ENCODE measurements at regions of chr6 and their contacts with region 1.

Region 1: GRCh38 chr6:170516783-170517616 is 36.1 kb downstream of the PSMB1 start:
- DNase-seq: no peak
- ATAC-seq: peak; percentile 84
- H3K4me3 Mint-ChIP-seq: no peak overlapping the region
- H3K27ac Mint-ChIP-seq: no peak overlapping the region
- H3K4me1 Mint-ChIP-seq: peaks cover 2% of the 10 kb centered on the region
- H3K27me3 Mint-ChIP-seq: peaks cover 24% of the 10 kb centered on the region
- CTCF ChIP-seq: no peak

Region 2: GRCh38 chr6:168895102-168895812 is 1621.7 kb before region 1 on chr6:
- CTCF ChIA-PET with region 1: interaction called, 4 read pairs
- POLR2A ChIA-PET with region 1: no interaction called
- intact Hi-C with region 1: loop called (anchors 1 kb)
- DNase-seq: peak; percentile 48
- ATAC-seq: peak; percentile 88
- H3K4me3 Mint-ChIP-seq: peak overlapping the region; percentile 51
- H3K27ac Mint-ChIP-seq: no peak overlapping the region
- H3K4me1 Mint-ChIP-seq: peaks cover 6% of the 10 kb centered on the region
- H3K27me3 Mint-ChIP-seq: peaks cover 6% of the 10 kb centered on the region
- CTCF ChIP-seq: peak; percentile 98

Region 3: GRCh38 chr6:168956884-168957730 is 1559.9 kb before region 1 on chr6:
- CTCF ChIA-PET with region 1: interaction called, 7 read pairs
- POLR2A ChIA-PET with region 1: no interaction called
- intact Hi-C with region 1: loop called (anchors 1 kb)
- DNase-seq: no peak
- ATAC-seq: no peak
- H3K4me3 Mint-ChIP-seq: no peak overlapping the region
- H3K27ac Mint-ChIP-seq: no peak overlapping the region
- H3K4me1 Mint-ChIP-seq: no peaks in the 10 kb centered on the region
- H3K27me3 Mint-ChIP-seq: peaks cover 12% of the 10 kb centered on the region
- CTCF ChIP-seq: no peak

Region 4: GRCh38 chr6:169328112-169328801 is 1188.7 kb before region 1 on chr6:
- CTCF ChIA-PET with region 1: no interaction called
- POLR2A ChIA-PET with region 1: no interaction called
- intact Hi-C with region 1: no loop called
- DNase-seq: no peak
- ATAC-seq: no peak
- H3K4me3 Mint-ChIP-seq: no peak overlapping the region
- H3K27ac Mint-ChIP-seq: no peak overlapping the region
- H3K4me1 Mint-ChIP-seq: no peaks in the 10 kb centered on the region
- H3K27me3 Mint-ChIP-seq: peaks cover 5% of the 10 kb centered on the region
- CTCF ChIP-seq: no peak

Region 5: GRCh38 chr6:169831450-169832246 is 685.4 kb before region 1 on chr6:
- CTCF ChIA-PET with region 1: interaction called, 46 read pairs
- POLR2A ChIA-PET with region 1: no interaction called
- intact Hi-C with region 1: loop called (anchors 1 kb)
- DNase-seq: peak; percentile 57
- ATAC-seq: peak; percentile 64
- H3K4me3 Mint-ChIP-seq: no peak overlapping the region
- H3K27ac Mint-ChIP-seq: no peak overlapping the region
- H3K4me1 Mint-ChIP-seq: no peaks in the 10 kb centered on the region
- H3K27me3 Mint-ChIP-seq: peaks cover 29% of the 10 kb centered on the region
- CTCF ChIP-seq: no peak

Region 6: DNA sequence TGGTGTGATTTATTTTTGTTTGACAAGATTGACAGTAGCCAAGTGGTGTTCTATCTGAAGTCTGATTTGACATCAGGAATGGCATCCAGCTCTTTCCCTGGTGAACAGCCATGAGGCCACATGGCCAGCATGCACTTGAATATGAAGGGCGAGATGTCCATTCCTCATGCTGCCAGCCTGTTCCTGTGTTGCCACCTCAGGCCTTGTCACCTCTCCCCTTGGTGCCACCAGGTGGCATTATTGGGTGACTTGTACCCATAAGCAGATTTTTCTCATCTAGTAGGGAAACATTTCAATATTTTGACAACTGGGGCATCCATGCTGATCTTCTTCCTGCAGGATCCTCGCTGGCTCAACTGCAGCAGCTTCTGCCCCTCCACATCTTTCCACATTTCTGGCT is 566.4 kb before region 1 on chr6:
- CTCF ChIA-PET with region 1: no interaction called
- POLR2A ChIA-PET with region 1: no interaction called
- intact Hi-C with region 1: loop called (anchors 1 kb)
- DNase-seq: peak; percentile 9
- ATAC-seq: no peak
- H3K4me3 Mint-ChIP-seq: no peak overlapping the region
- H3K27ac Mint-ChIP-seq: no peak overlapping the region
- H3K4me1 Mint-ChIP-seq: no peaks in the 10 kb centered on the region
- H3K27me3 Mint-ChIP-seq: no peaks in the 10 kb centered on the region
- CTCF ChIP-seq: no peak

Region 7: GRCh38 chr6:170291271-170292110 is 225.5 kb before region 1 on chr6:
- CTCF ChIA-PET with region 1: no interaction called
- POLR2A ChIA-PET with region 1: no interaction called
- intact Hi-C with region 1: no loop called
- DNase-seq: peak; percentile 42
- ATAC-seq: peak; percentile 46
- H3K4me3 Mint-ChIP-seq: peak overlapping the region; percentile 88
- H3K27ac Mint-ChIP-seq: no peak overlapping the region
- H3K4me1 Mint-ChIP-seq: peaks cover 54% of the 10 kb centered on the region
- H3K27me3 Mint-ChIP-seq: peaks cover 48% of the 10 kb centered on the region
- CTCF ChIP-seq: no peak

Region 8: GRCh38 chr6:170416303-170416702 is 100.7 kb before region 1 on chr6:
- CTCF ChIA-PET with region 1: no interaction called
- POLR2A ChIA-PET with region 1: no interaction called
- intact Hi-C with region 1: no loop called
- DNase-seq: no peak
- ATAC-seq: no peak
- H3K4me3 Mint-ChIP-seq: no peak overlapping the region
- H3K27ac Mint-ChIP-seq: no peak overlapping the region
- H3K4me1 Mint-ChIP-seq: no peaks in the 10 kb centered on the region
- H3K27me3 Mint-ChIP-seq: peaks cover 8% of the 10 kb centered on the region
- CTCF ChIP-seq: no peak

Region 9: DNA sequence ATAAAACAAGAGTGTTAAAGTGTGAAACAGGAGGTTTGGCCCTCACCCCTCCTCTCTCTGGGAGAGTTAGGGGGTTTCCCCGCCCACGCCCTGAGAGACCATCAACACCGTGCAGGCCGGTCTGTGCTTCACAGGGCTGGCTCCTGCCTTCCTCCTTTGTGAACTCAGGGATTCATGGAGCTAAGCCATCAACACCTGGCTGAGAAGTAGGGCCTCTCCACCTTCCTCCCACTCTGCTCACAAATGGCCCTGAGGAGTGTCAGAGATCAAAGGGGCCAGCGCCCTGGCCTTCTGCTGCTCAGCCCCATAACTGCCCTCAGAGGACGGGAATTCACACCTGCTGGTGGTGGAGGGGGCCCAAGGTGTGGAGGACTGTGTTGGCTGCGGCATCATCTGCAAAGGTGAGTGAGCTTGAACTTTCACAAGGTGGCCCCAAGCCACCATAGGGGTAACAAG is 52.4 kb before region 1 on chr6:
- CTCF ChIA-PET with region 1: no interaction called
- POLR2A ChIA-PET with region 1: no interaction called
- intact Hi-C with region 1: no loop called
- DNase-seq: no peak
- ATAC-seq: no peak
- H3K4me3 Mint-ChIP-seq: no peak overlapping the region
- H3K27ac Mint-ChIP-seq: no peak overlapping the region
- H3K4me1 Mint-ChIP-seq: peaks cover 5% of the 10 kb centered on the region
- H3K27me3 Mint-ChIP-seq: peaks cover 6% of the 10 kb centered on the region
- CTCF ChIP-seq: no peak

Measured in activated B cell treated with CpG ODN at 0.5 μM for 24 hours (primary cell).